Caco-2 (cell line): ENCODE measurements at regions of chr4 and their contacts with region 1.

Region 1: DNA sequence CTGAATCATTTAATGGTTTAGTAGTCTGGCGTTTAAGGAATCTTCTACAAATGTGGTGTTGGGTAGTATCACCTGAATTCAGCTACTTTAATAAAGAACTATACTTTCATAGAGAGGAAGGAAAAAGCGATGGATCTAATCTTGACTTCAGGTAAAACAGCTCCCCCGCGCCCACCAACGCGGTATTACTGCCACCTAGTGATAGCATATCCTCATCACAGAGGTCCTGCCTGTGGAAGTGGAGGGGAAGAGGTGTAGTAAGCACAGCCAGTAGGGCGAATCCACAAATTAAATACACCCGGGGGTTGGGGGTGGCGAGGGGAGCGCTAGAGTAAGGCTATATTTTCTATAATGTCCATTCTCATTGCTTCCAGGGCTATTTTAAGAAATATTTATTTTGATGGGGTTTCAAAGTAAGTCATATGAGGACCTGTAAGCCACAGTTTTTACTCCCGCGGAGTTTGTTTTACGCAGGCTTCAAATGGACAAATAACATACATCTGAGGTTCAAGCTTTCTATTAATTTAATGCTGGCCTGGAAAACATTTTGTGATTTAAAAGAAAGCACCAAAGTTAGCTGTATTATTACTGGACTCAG is 8.3 kb upstream of the DAPP1 start:
- DNase-seq: peak; percentile 71 to 75
- H3K4me3 ChIP-seq: no peak overlapping the region
- H3K4me3 Mint-ChIP-seq: no peak overlapping the region
- H3K27ac Mint-ChIP-seq: no peak overlapping the region
- H3K4me1 ChIP-seq: no peaks in the 10 kb centered on the region
- H3K4me1 Mint-ChIP-seq: no peaks in the 10 kb centered on the region
- H3K27me3 ChIP-seq: no peaks in the 10 kb centered on the region; the same call in 1 of the 2 replicates
- H3K27me3 Mint-ChIP-seq: peaks cover 3% of the 10 kb centered on the region
- CTCF ChIP-seq: peak; percentile 64 to 78

Region 2: DNA sequence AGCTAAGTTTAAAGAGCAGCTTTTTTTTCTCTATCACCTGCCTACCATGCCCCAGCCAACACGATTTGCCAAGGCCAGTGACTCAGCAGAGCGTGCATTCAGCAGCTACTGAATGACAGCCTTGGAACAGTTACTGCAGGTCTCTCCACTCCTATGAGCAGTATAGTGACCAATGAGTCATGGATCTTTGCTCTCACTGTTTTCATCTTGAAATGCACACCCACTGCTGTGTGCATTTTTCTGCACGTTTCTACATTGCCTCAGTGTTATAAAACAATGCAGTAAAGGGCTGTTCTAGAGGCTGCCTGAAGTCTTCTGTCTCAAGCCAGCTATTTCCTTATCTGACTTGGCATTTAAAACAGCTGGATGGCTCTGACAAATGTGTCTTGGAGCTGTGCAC is 84.7 kb before region 1 on chr4:
- CTCF ChIA-PET with region 1: interaction called, 7 read pairs
- POLR2A ChIA-PET with region 1: no interaction called
- intact Hi-C with region 1: loop called (anchors 1 kb)
- DNase-seq: no peak
- H3K4me3 ChIP-seq: no peak overlapping the region
- H3K4me3 Mint-ChIP-seq: no peak overlapping the region
- H3K27ac Mint-ChIP-seq: no peak overlapping the region
- H3K4me1 ChIP-seq: no peaks in the 10 kb centered on the region
- H3K4me1 Mint-ChIP-seq: no peaks in the 10 kb centered on the region
- H3K27me3 ChIP-seq: no peaks in the 10 kb centered on the region
- H3K27me3 Mint-ChIP-seq: peaks cover 4% of the 10 kb centered on the region
- CTCF ChIP-seq: no peak

Region 3: GRCh38 chr4:99885063-99885664 is 76.8 kb after region 1 on chr4:
- CTCF ChIA-PET with region 1: interaction called, 11 read pairs
- POLR2A ChIA-PET with region 1: no interaction called
- intact Hi-C with region 1: loop called (anchors 1 kb)
- DNase-seq: peak in 1 of 2 experiments; percentile 29
- H3K4me3 ChIP-seq: no peak overlapping the region
- H3K4me3 Mint-ChIP-seq: no peak overlapping the region
- H3K27ac Mint-ChIP-seq: no peak overlapping the region
- H3K4me1 ChIP-seq: no peaks in the 10 kb centered on the region
- H3K4me1 Mint-ChIP-seq: no peaks in the 10 kb centered on the region
- H3K27me3 ChIP-seq: no peaks in the 10 kb centered on the region
- H3K27me3 Mint-ChIP-seq: no peaks in the 10 kb centered on the region
- CTCF ChIP-seq: peak; percentile 37 to 55

Region 4: DNA sequence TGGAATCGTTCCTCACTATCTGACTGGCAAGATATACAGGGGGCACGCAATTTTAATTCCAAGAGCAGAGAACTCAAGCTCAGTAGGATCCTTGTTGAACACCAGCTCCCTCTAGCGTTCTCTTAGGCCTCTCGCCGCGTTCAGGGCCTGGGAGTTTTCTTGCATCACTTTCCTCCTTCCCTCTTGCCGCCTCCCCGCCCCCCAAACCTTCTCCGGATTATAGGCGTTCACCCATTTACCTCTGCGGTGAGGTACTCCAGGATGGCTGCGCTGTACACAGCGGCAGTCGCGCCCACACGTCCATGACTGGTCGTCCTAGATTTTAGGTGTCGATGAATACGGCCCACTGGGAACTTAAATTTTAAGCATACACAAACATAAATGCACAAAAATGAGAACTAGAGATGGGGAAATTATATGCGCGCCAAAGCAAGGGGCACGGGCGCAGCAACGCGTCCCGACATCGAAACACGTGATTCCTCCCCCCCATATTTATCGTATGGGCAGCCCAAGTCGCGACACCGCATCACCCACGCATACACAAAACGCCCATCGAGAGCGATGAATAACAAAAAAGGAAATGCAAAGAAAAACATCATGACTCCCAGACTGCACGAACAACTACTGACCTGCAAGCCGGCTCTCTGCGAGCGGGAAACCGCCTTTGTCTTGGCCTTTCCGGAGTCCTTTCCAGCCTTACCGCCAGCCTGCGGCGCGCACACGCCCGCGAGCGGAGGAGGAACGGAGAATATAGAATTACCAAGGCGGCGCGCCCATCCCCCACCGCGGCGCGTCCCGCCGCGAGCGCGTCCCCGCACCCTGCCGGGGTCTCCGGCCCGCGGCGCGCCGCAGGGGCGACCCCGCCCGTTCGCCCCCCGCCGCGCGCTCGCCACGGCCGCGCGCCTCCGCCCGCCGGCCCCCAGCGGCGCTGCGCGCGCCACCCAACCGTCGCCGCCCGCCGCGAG is 141.0 kb after region 1 on chr4:
- CTCF ChIA-PET with region 1: interaction called, 3 read pairs
- POLR2A ChIA-PET with region 1: no interaction called
- intact Hi-C with region 1: loop called (anchors 1 kb)
- DNase-seq: peak; percentile 91 to 94
- H3K4me3 ChIP-seq: peak overlapping the region; percentile 72
- H3K4me3 Mint-ChIP-seq: no peak overlapping the region
- H3K27ac Mint-ChIP-seq: no peak overlapping the region
- H3K4me1 ChIP-seq: peaks cover 16% of the 10 kb centered on the region; the same call in 1 of the 2 replicates
- H3K4me1 Mint-ChIP-seq: no peaks in the 10 kb centered on the region
- H3K27me3 ChIP-seq: no peaks in the 10 kb centered on the region
- H3K27me3 Mint-ChIP-seq: no peaks in the 10 kb centered on the region
- CTCF ChIP-seq: peak; percentile 60 to 86

Region 5: DNA sequence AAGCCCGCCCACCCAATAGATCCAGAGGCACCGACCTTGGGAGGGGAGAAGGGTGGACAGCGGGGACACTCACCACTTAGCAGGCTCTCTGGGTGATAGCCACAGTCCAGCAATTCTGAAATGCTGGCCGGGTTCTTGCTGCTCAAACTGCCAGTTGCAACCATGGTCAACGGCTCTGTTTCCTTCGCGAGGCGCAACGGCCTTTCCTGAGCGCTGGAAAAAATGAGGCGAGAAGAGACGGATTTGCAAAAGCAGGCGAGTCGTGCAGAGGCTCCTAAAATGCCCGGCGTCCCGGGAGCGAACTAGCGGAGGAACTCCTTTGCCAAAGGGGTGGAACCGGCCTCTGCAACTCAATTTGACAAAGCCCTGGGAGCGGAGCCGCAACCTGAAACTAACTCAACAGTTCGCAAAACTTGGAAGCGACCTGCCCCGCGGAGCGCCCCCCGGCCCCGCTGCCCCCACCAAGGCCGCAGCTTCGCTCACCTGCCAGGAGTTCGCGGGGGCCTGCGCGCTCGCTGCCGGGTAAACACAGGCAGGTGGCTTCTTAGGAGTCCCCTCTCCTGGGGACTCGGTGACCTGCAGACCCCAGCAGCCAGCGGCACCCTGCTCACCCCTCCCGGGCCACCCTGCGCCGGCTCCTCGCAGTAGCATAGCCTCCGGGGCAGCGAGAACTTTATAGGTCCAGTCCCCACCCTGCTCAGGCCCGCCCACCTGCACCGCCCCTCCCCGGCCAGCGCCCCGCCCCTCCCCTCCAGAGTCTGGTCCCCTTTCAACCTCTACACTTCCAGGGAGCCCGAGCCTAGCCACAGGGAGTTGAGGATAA is 381.7 kb after region 1 on chr4 and contains the start of gene DDIT4L:
- CTCF ChIA-PET with region 1: no interaction called
- POLR2A ChIA-PET with region 1: no interaction called
- intact Hi-C with region 1: no loop called
- DNase-seq: peak; percentile 58 to 59
- H3K4me3 ChIP-seq: peak within 1 kb of the TSS; percentile 45
- H3K4me3 Mint-ChIP-seq: peak within 1 kb of the TSS; percentile 83
- H3K27ac Mint-ChIP-seq: no peak within 1 kb of the TSS
- H3K4me1 ChIP-seq: no peaks in the 10 kb centered on the region
- H3K4me1 Mint-ChIP-seq: peaks cover 6% of the 10 kb centered on the region
- H3K27me3 ChIP-seq: no peaks in the 10 kb centered on the region
- H3K27me3 Mint-ChIP-seq: peaks cover 3% of the 10 kb centered on the region
- CTCF ChIP-seq: no peak
- total RNA-seq, gene DDIT4L: 4.0 and 4.7 TPM in 2 replicates